Ascending aorta (tissue), 2 donors: ENCODE measurements at regions of chr20 and their contacts with region 1.

Region 1: GRCh38 chr20:2692036-2692885 is at the start of gene EBF4:
- DNase-seq: peak in 1 of 2 donors; percentile 71
- H3K4me3 ChIP-seq: peak within 1 kb of the TSS; percentile 65 to 92
- H3K27ac ChIP-seq: peak within 1 kb of the TSS; percentile 83 to 94
- H3K4me1 ChIP-seq: peaks cover 2 to 7% of the 10 kb centered on the region in 2 donors
- H3K27me3 ChIP-seq: peaks cover 6% of the 10 kb centered on the region
- CTCF ChIP-seq: no peak
- total RNA-seq, gene EBF4: 19.2 TPM

Region 2: DNA sequence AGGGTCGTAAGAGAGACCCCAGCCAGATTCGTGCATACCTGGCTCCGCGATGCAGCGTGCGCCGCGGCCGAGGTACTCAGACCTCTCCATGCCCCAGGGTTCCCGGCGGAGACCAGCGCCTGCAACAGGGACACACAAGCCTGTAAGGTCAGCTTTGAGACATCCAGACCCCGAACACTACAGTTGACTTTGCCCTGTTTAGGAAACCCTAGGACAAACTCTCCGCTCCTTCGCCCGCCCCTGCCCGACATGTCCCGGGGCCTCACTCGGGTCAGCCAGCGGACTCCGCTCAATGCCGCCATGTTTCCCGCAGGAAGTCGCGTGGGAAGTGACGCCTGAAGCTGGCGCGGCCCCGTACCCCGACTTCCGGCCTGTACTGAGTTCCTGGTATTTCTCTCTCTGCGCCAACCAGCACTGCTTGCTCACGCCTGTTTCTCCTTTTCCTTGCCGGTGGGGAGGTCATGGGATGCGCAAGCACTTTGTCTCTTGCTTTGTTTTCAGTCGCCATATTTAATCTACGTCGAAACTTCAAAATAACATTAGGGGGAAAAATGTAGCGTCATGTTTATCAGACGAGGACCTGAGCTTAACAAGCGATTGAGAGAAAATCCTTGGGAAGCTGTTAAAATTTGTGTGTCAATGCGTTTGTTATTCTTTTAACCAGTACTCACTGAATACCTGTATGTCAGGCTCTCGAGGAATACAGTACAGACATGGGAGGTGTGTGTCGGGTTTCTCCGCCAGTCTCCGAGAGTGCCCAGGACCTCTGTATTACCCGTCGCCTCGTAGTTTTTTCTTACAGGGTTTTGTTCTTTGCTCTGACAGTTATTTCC is 28.2 kb before region 1 on chr20 and contains the start of gene IDH3B:
- intact Hi-C with region 1: loop called (anchors 1 kb)
- DNase-seq: peak; percentile 80 to 97
- H3K4me3 ChIP-seq: peak within 1 kb of the TSS; percentile 77 to 81
- H3K27ac ChIP-seq: peak within 1 kb of the TSS; percentile 82 to 86
- H3K4me1 ChIP-seq: peaks cover 3 to 10% of the 10 kb centered on the region in 2 donors
- H3K27me3 ChIP-seq: no peaks in the 10 kb centered on the region
- CTCF ChIP-seq: no peak
- total RNA-seq, gene IDH3B: 24.9 TPM

Region 3: GRCh38 chr20:2752567-2753460 is 60.6 kb after region 1 on chr20:
- intact Hi-C with region 1: loop called (anchors 5 kb)
- DNase-seq: peak in 1 of 2 donors; percentile 65
- H3K4me3 ChIP-seq: peak overlapping the region; percentile 62
- H3K27ac ChIP-seq: no peak overlapping the region
- H3K4me1 ChIP-seq: peaks cover 13 to 14% of the 10 kb centered on the region in 2 donors
- H3K27me3 ChIP-seq: peaks cover 3% of the 10 kb centered on the region
- CTCF ChIP-seq: peak; percentile 27 to 60 (median 50)

Region 4: GRCh38 chr20:2840138-2840966 is 148.1 kb after region 1 on chr20 and contains the starts of genes PCED1A and VPS16:
- intact Hi-C with region 1: loop called (anchors 2 kb)
- DNase-seq: peak; percentile 37 to 92
- H3K4me3 ChIP-seq: peak within 1 kb of the TSS; percentile 73 to 87
- H3K27ac ChIP-seq: peak within 1 kb of the TSS; percentile 86 to 89
- H3K4me1 ChIP-seq: peaks cover 5% of the 10 kb centered on the region in 2 donors
- H3K27me3 ChIP-seq: no peaks in the 10 kb centered on the region
- CTCF ChIP-seq: no peak
- total RNA-seq, gene PCED1A: 49.7 TPM
- total RNA-seq, gene VPS16: 61.1 TPM

Region 5: GRCh38 chr20:2873010-2873746 is 180.9 kb after region 1 on chr20 and contains the start of gene PTPRA:
- intact Hi-C with region 1: loop called (anchors 10 kb)
- DNase-seq: peak; percentile 71 to 94
- H3K4me3 ChIP-seq: peak within 1 kb of the TSS; percentile 81 to 96
- H3K27ac ChIP-seq: peak within 1 kb of the TSS; percentile 62 to 66
- H3K4me1 ChIP-seq: peaks cover 4 to 8% of the 10 kb centered on the region in 2 donors
- H3K27me3 ChIP-seq: no peaks in the 10 kb centered on the region
- CTCF ChIP-seq: no peak
- total RNA-seq, gene PTPRA: 24.2 TPM

Region 6: DNA sequence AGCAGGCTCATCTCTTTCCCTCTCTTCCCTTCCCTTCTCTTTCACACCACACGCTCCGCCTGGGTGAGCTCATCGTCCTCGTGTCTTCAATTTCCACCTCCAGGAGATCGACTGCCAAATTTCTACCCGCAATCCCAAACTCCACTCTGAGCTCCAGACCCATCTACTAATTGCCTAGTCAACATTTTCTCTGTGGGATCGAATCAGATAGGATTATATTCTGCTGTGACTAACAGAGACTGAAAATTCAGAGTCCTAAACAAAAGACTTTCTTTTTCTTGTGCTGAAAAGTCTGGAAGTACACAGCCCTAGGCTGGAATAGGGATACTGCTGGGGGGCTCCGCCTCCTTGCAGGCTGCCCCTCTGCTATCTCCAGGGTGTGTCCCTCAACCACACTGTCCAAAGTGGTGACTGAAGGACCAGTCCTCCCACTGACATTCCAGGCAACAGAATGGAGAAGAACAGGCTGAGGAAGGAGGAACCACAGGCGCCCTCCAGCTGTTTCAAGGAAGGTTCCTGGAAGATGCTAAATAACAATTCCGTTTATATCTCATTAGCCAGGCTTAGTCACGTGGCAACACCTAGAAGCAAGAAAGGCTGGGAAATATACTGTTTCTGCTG is 1035.2 kb after region 1 on chr20:
- intact Hi-C with region 1: no loop called
- DNase-seq: no peak
- H3K4me3 ChIP-seq: no peak overlapping the region
- H3K27ac ChIP-seq: no peak overlapping the region
- H3K4me1 ChIP-seq: no peaks in the 10 kb centered on the region
- H3K27me3 ChIP-seq: peaks cover 8% of the 10 kb centered on the region
- CTCF ChIP-seq: no peak